ENCODE measurements at regions of chr22 and their contacts with region 1.

Region 1: GRCh38 chr22:29245637-29246385 is 22.0 kb downstream of the RHBDD3 start:
- DNase-seq: peak; percentile 58
- H3K4me3 ChIP-seq: no peak overlapping the region
- H3K27ac ChIP-seq: no peak overlapping the region
- H3K4me1 ChIP-seq: no peaks in the 10 kb centered on the region
- H3K27me3 ChIP-seq: peaks cover 3 to 5% of the 10 kb centered on the region in 2 experiments
- CTCF ChIP-seq: peak; percentile 91 to 97
- POLR2A ChIP-seq: no peak

Region 2: DNA sequence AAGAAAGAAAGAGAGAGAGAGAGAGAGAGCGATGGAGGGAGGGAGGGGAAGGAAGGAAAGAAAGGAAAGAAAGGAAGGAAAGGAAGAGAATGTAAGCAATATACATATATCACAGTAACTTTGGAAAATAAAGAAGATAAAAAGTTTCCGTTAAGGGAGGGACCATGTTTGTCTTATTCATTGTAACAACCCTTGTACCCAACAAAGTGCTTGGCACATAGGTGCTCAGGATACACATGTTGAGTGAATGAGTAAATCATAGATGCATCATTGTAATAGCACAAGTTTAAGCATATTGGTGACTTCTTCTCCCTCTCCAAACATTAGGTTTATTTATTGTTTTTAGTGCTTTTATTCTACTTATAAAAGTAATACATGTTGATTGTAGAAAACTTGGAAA is 402.2 kb before region 1 on chr22:
- CTCF ChIA-PET with region 1: no interaction called
- POLR2A ChIA-PET with region 1: no interaction called
- dilution Hi-C with region 1: no loop called
- intact Hi-C with region 1: no loop called
- DNase-seq: no peak
- H3K4me3 ChIP-seq: no peak overlapping the region
- H3K27ac ChIP-seq: no peak overlapping the region
- H3K4me1 ChIP-seq: no peaks in the 10 kb centered on the region
- H3K27me3 ChIP-seq: no peaks in the 10 kb centered on the region
- CTCF ChIP-seq: no peak
- POLR2A ChIP-seq: no peak

Region 3: GRCh38 chr22:28855355-28856094 is 390.3 kb before region 1 on chr22:
- CTCF ChIA-PET with region 1: interaction called, 13 read pairs
- POLR2A ChIA-PET with region 1: no interaction called
- dilution Hi-C with region 1: no loop called
- intact Hi-C with region 1: loop called (anchors 1 kb)
- DNase-seq: peak; percentile 80
- H3K4me3 ChIP-seq: no peak overlapping the region
- H3K27ac ChIP-seq: no peak overlapping the region
- H3K4me1 ChIP-seq: no peaks in the 10 kb centered on the region
- H3K27me3 ChIP-seq: no peaks in the 10 kb centered on the region
- CTCF ChIP-seq: peak; percentile 74 to 79
- POLR2A ChIP-seq: no peak

Region 4: GRCh38 chr22:29202212-29203192 is 43.3 kb before region 1 on chr22:
- CTCF ChIA-PET with region 1: interaction called, 25 read pairs
- POLR2A ChIA-PET with region 1: no interaction called
- dilution Hi-C with region 1: no loop called
- intact Hi-C with region 1: loop called (anchors 2 kb)
- DNase-seq: peak; percentile 26
- H3K4me3 ChIP-seq: no peak overlapping the region
- H3K27ac ChIP-seq: no peak overlapping the region
- H3K4me1 ChIP-seq: peaks cover 9% of the 10 kb centered on the region
- H3K27me3 ChIP-seq: peaks cover 0 to 7% of the 10 kb centered on the region in 2 experiments
- CTCF ChIP-seq: peak; percentile 25 to 49
- POLR2A ChIP-seq: no peak

Region 5: GRCh38 chr22:29231971-29232959 is 13.5 kb before region 1 on chr22:
- CTCF ChIA-PET with region 1: interaction called, 18 read pairs
- POLR2A ChIA-PET with region 1: no interaction called
- dilution Hi-C with region 1: no loop called
- intact Hi-C with region 1: no loop called
- DNase-seq: peak; percentile 36
- H3K4me3 ChIP-seq: no peak overlapping the region
- H3K27ac ChIP-seq: no peak overlapping the region
- H3K4me1 ChIP-seq: peaks cover 8% of the 10 kb centered on the region
- H3K27me3 ChIP-seq: no peaks in the 10 kb centered on the region
- CTCF ChIP-seq: no peak
- POLR2A ChIP-seq: no peak

Region 6: DNA sequence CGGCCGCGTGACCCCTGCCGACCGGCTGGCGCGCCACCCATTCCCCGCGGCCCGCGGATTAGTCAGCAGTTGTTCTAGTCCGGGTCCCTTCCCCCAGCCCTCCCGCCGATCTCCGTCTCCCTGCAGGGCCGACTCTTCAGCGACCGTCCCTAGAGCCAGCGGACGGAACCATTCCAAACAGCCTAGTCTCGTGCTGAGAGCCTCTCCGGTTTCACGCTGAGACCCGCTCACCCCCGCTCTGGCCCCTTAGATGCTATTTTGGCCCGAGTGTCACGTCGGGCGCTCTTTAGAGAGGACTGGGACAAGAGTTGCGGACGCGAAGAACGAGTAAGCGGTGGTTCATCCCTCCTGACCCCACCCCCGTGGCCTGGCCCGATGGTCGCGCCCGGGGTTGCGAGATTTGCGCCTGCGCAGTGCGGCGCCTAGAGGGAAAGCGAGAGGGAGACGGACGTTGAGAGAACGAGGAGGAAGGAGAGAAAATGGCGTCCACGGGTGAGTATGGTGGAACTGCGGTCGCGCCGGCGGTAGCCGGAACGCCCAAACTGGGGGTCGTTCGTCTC is 22.1 kb after region 1 on chr22 and contains the starts of genes EWSR1 and RHBDD3:
- CTCF ChIA-PET with region 1: interaction called, 11 read pairs
- POLR2A ChIA-PET with region 1: no interaction called
- dilution Hi-C with region 1: no loop called
- intact Hi-C with region 1: no loop called
- DNase-seq: peak; percentile 93
- H3K4me3 ChIP-seq: peak within 1 kb of the TSS; percentile 75 to 85 (median 84)
- H3K27ac ChIP-seq: peak within 1 kb of the TSS; percentile 100
- H3K4me1 ChIP-seq: peaks cover 40% of the 10 kb centered on the region
- H3K27me3 ChIP-seq: no peaks in the 10 kb centered on the region
- CTCF ChIP-seq: no peak
- POLR2A ChIP-seq: peak; percentile 73
- total RNA-seq, gene EWSR1: 302 and 305 TPM in 2 replicates
- total RNA-seq, gene RHBDD3: 31.3 and 36.3 TPM in 2 replicates

Measured in endothelial cell of umbilical vein (primary cell).